Lower leg skin (tissue), 4 donors: ENCODE measurements at regions of chr7 and their contacts with region 1.

Region 1: GRCh38 chr7:137619181-137619580 is 227.6 kb downstream of the DGKI start:
- DNase-seq: no peak
- H3K4me3 ChIP-seq: no peak overlapping the region
- CTCF ChIP-seq: no peak
- POLR2A ChIP-seq: no peak

Region 2: DNA sequence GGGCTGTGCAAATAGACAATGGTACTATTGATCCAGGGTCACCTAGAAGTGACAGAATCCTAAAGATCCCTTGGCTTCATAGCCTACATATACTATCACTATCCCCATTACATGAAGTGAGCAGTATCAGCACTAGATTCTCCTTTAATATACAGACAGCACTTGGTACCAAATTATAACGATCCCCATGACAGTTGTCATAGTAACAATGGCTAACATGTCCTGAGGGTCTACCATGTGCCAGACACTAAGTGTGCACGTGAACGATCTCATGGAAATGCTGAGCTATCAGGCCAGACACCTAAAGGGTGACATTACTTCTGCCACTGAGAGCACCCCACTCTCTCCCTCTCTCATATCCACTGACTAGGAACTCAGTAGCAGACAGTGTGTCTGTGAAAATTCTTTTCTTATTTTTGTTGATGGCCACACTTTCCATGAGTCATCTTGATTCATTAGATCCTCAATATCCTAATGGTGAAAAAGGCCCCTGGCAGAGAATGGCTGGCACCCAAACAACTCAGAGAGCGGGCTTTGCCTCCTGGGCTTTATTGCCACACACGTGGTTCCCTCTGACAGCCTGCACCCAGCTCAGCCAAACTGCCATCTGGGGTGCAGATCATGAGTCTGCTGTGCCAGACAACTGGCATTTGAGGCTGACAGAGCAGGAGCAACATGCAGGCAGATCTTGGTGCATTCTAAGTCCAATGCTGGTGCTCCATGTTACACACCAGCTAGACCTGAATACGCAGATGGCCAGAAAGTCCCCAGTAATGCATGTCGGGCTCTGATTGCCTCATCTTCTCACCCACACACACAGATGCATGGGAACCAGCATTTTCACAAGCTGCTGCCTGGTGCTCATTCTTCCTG is 51.3 kb after region 1 on chr7:
- intact Hi-C with region 1: no loop called
- DNase-seq: no peak
- H3K4me3 ChIP-seq: no peak overlapping the region
- CTCF ChIP-seq: no peak
- POLR2A ChIP-seq: no peak

Region 3: DNA sequence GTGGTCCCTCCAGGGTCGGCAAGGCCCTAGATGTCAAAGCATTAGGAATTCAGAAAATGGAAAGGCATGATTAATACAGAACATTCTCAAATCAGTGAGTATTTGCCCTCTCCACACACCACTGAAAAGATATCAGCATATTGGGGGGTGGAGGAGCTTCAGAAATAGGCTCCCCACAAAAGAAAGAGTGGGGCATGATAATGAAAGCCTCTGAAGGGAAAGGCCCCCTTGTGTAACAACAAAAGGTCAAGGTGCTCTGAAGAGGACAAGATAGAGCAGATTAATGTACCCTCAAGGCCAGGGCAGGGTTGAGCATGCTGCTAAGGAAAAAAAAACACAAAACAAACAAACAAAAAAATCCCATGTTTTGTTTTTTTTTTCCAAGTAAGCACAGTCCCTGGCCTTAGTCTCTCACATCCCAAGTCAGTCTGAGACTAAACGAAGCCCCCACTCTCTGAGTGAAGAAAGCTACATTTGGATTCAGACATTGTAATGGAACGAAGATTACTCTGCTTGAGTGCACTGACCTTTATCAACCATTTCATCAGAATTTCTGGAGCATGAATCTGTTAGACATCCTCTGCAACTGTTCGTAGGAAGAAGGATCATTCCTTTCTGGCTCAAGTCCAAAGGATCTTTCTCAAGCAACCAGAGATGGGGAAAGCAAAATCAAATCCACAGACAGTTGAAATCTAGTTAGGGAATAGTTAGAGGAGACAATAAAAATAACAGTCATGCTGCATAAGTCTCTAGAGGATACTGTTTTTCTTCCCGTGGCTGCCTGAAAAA is 255.0 kb after region 1 on chr7:
- intact Hi-C with region 1: no loop called
- DNase-seq: no peak
- H3K4me3 ChIP-seq: no peak overlapping the region
- CTCF ChIP-seq: no peak
- POLR2A ChIP-seq: no peak

Region 4: DNA sequence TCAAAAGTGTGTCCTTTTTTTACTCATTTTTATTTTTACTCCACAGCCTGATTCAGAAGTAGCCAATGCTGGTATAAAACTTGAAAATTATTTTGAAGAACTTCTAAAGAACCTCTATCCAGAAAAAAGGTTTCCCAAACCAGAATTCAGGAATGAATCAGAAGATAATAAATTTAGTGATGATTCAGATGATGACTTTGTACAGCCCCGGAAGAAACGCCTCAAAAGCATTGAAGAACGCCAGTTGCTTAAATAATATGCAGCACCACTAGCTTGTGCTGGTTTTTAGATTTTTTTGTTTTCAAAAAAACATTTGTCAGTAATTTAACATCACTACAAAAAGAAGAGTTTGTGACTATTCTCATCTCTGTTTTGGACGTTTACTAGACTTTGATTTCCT is 965.5 kb after region 1 on chr7:
- intact Hi-C with region 1: loop called (anchors 10 kb)
- DNase-seq: no peak
- H3K4me3 ChIP-seq: no peak overlapping the region
- CTCF ChIP-seq: no peak
- POLR2A ChIP-seq: no peak